Pancreas (tissue), 10 donors: ENCODE measurements at regions of chr20 and their contacts with region 1.

Region 1: DNA sequence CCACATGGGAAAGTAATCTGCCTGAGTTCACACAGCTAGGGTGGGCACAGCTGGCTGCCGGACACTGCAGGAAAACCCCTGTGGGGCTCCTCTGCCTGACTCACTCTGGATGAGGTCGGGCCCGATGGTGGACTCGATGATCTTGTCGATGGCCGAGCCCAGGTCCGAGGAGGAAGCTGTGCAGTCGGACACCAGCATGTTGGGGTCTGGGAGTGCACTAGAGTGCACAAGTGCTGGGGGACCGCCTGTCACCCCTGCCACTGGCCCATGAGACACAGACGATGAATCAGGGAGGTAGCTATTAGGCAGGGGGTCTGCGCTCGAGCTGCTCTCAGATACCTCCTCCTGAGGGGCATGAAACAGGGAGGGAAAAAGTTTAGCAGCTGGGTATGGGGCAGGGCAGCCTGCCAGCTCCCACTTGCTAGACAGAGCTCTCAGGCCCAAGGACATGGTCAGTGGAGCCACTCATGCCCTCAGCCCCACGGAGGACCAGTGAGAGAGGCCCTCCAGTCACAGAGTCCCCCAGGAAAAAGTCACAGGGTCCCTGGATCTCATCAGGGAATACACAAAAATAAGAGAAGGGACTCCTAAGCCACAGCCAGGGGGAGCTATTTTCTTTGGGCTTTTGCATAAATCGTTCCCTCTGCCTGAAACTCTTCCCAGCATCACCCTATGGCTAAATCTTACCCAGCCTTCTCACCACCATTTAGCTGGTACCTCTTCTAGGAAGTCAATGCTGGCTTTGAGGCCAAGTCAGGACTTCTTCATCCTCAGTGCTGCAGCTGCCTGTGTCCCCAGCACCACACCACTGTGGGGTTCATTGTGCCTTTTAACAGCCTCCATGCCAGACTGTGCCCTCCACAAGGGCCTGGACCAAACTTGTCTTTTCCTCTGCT is 2.4 kb downstream of the ZNF335 start:
- DNase-seq: peak in 3 of 6 donors; percentile 36 to 74 (median 50)
- ATAC-seq: no peak
- H3K4me3 ChIP-seq: peak overlapping the region in 1 of 4 donors; percentile 71
- H3K27ac ChIP-seq: no peak overlapping the region
- H3K4me1 ChIP-seq: peaks cover 0 to 20% (median 8%) of the 10 kb centered on the region in 3 donors
- H3K27me3 ChIP-seq: no peaks in the 10 kb centered on the region
- CTCF ChIP-seq: peak; percentile 18 to 42 (median 28)

Region 2: GRCh38 chr20:45823949-45824835 is 145.4 kb before region 1 on chr20:
- intact Hi-C with region 1: loop called in 1 of 3 experiments (anchors 10 kb)
- DNase-seq: peak in 2 of 6 donors; percentile 24 to 69
- ATAC-seq: peak; percentile 55 to 81 (median 77)
- H3K4me3 ChIP-seq: peak overlapping the region in 1 of 4 donors; percentile 21
- H3K27ac ChIP-seq: no peak overlapping the region
- H3K4me1 ChIP-seq: peaks cover 0 to 4% (median 0%) of the 10 kb centered on the region in 3 donors
- H3K27me3 ChIP-seq: peaks cover 0 to 15% (median 2%) of the 10 kb centered on the region in 4 donors
- CTCF ChIP-seq: no peak

Region 3: DNA sequence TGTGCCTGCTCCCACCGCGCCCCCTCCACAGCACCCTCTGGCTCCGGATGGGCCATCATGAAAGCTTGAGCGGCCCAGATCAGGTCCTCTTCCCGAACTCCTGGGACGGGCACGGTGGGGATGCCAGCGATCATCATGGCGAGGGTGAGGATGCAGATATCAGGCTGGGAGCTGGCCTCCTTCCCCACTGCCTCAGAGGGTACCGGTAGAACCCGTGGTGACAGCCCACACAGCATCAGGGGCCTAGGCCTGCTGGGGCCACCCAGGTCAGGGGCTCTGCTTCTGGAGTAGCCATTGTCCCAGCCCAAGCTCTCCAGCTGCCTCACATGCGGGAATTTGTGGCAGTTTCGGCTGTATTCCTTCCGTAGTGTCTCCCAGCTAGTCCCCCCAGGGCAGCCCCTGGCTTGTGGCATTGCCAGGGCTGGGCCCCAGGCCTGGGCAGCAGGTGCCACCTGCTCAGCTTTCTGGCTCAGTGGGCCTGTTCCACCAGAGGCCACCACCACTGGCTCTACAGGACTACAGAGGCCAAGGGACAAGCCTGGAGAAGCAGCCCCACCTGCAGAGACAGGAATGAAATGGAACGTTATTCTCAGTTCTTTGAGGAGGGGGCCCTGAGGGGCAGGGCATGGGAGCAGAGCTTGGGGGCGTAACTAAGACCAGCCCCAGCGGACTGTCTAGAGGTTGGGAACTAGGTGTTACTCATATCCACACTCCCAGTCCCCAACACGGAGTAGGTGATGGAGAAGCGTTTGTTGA is 82.8 kb before region 1 on chr20:
- intact Hi-C with region 1: loop called in 1 of 3 experiments (anchors 5 kb)
- DNase-seq: no peak
- ATAC-seq: no peak
- H3K4me3 ChIP-seq: no peak overlapping the region
- H3K27ac ChIP-seq: no peak overlapping the region
- H3K4me1 ChIP-seq: peaks cover 1 to 3% (median 1%) of the 10 kb centered on the region in 3 donors
- H3K27me3 ChIP-seq: no peaks in the 10 kb centered on the region
- CTCF ChIP-seq: no peak